Gastrocnemius medialis (tissue), 4 donors: ENCODE measurements at regions of chr15 and their contacts with region 1.

Region 1: DNA sequence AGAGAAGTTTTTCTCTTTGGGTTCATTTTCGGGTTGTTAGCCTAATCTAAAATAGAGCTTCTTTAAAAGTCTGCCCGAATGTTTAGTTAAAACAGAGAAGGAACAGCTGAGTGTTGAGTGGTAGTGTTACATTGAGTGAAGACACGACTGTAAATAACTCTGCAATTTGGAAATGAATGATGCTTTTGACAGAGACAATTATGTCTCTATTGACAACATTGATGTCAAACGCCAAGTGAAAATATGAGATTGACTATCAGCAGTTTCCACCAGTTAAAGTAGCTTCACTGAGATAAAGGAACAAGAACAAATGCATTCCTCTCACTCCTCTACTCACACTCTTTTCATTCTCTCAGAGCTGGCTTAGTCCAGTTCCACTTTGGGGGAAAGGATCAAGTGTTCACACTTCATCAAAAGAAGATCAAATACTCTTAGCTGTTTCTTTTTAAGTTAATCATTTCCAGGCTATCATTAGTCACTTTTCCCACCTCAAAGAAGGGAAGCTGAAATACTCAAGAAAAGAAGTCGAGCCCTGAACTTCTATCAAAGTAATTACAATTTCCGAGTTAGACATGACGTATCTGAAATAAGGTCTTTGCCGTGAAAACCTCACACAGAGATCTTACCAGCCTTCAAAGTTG is 399.1 kb upstream of the DPH6 start:
- DNase-seq: no peak
- ATAC-seq: no peak
- H3K4me3 ChIP-seq: no peak overlapping the region
- H3K27ac ChIP-seq: no peak overlapping the region
- H3K4me1 ChIP-seq: no peaks in the 10 kb centered on the region
- H3K27me3 ChIP-seq: no peaks in the 10 kb centered on the region
- CTCF ChIP-seq: no peak
- POLR2A ChIP-seq: no peak

Region 2: DNA sequence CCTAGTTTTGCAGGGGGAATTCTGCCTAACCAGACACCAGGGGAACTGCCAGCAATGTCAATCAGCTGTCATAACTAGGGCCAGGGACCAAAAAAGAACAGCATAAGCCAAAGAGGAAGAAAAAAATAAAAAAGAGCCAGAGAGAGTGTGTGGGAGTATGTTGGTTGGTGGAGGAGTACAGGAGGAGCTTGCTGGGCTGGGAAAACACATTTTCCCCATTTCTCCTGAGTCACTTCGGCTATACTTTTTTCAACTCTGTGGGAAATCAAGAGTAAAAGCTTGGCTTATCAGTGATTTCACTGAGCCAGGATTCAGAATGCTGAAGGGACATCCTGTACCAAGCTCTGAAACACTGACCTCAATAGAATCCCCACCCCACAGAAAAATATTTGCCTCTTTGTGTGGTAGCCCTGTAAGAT is 254.4 kb before region 1 on chr15:
- in situ Hi-C with region 1: no loop called
- intact Hi-C with region 1: no loop called
- DNase-seq: peak in 1 of 2 donors; percentile 25
- ATAC-seq: peak; percentile 91 to 94
- H3K4me3 ChIP-seq: peak overlapping the region; percentile 0 to 20 (median 14)
- H3K27ac ChIP-seq: peak overlapping the region; percentile 61 to 85 (median 84)
- H3K4me1 ChIP-seq: peaks cover 30 to 43% of the 10 kb centered on the region in 2 donors
- H3K27me3 ChIP-seq: no peaks in the 10 kb centered on the region
- CTCF ChIP-seq: no peak
- POLR2A ChIP-seq: no peak

Region 3: DNA sequence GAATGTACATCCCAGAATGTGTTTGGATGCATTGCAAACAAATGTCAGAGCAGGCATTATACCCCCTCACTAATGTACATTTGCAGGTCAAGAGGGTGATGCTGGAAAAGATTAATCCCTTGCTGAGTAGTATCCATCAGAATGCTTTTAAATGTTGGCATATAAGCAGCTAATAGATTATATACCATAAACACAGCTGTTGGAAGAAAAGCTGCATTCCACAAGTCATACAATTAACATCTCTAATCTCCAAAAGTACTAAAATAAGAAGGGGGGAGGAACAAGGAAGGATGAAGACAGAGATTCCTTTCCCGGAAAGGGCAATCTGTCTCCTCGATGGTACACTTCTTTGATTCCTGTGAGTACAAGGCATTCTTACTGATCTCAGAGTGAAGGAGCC is 188.7 kb after region 1 on chr15:
- in situ Hi-C with region 1: no loop called
- intact Hi-C with region 1: no loop called
- DNase-seq: no peak
- ATAC-seq: no peak
- H3K4me3 ChIP-seq: no peak overlapping the region
- H3K27ac ChIP-seq: no peak overlapping the region
- H3K4me1 ChIP-seq: no peaks in the 10 kb centered on the region
- H3K27me3 ChIP-seq: no peaks in the 10 kb centered on the region
- CTCF ChIP-seq: no peak
- POLR2A ChIP-seq: no peak

Region 4: GRCh38 chr15:36506733-36507356 is 561.8 kb after region 1 on chr15:
- in situ Hi-C with region 1: no loop called
- intact Hi-C with region 1: loop called (anchors 5 kb)
- DNase-seq: no peak
- ATAC-seq: no peak
- H3K4me3 ChIP-seq: no peak overlapping the region
- H3K27ac ChIP-seq: no peak overlapping the region
- H3K4me1 ChIP-seq: no peaks in the 10 kb centered on the region
- H3K27me3 ChIP-seq: no peaks in the 10 kb centered on the region
- CTCF ChIP-seq: no peak
- POLR2A ChIP-seq: no peak